ENCODE measurements at regions of chr17 and their contacts with region 1.

Region 1: GRCh38 chr17:82297714-82298537 is 19.5 kb downstream of the CD7 start:
- DNase-seq: peak; percentile 90
- H3K4me3 ChIP-seq: peak overlapping the region; percentile 40 to 52
- H3K27ac ChIP-seq: peak overlapping the region; percentile 77 to 84
- H3K4me1 ChIP-seq: peaks cover 28 to 37% of the 10 kb centered on the region in 2 experiments; a peak in 3 of 4 replicates
- H3K27me3 ChIP-seq: no peaks in the 10 kb centered on the region
- CTCF ChIP-seq: peak; percentile 18; the same call in 1 of the 2 replicates
- EP300 ChIP-seq: no peak; a peak in 1 of 4 replicates
- RAD21 ChIP-seq: no peak

Region 2: GRCh38 chr17:82236142-82236981 is 61.6 kb before region 1 on chr17:
- CTCF ChIA-PET with region 1: interaction called, 153 read pairs
- POLR2A ChIA-PET with region 1: interaction called, 5 read pairs
- DNase-seq: peak; percentile 97
- H3K4me3 ChIP-seq: no peak overlapping the region; a peak in 1 of 4 replicates
- H3K27ac ChIP-seq: peak overlapping the region in 1 of 2 experiments; percentile 6; a peak in 1 of 4 replicates
- H3K4me1 ChIP-seq: peaks cover 18 to 33% of the 10 kb centered on the region in 2 experiments; a peak in 3 of 4 replicates
- H3K27me3 ChIP-seq: no peaks in the 10 kb centered on the region
- CTCF ChIP-seq: peak; percentile 99
- EP300 ChIP-seq: no peak
- RAD21 ChIP-seq: peak; percentile 84

Region 3: GRCh38 chr17:82309656-82310570 is 12.0 kb after region 1 on chr17:
- CTCF ChIA-PET with region 1: interaction called, 26 read pairs
- POLR2A ChIA-PET with region 1: no interaction called
- DNase-seq: no peak
- H3K4me3 ChIP-seq: no peak overlapping the region
- H3K27ac ChIP-seq: no peak overlapping the region
- H3K4me1 ChIP-seq: peaks cover 0 to 8% of the 10 kb centered on the region in 2 experiments; a peak in 1 of 4 replicates
- H3K27me3 ChIP-seq: no peaks in the 10 kb centered on the region; the same call in 1 of the 2 replicates
- CTCF ChIP-seq: no peak
- EP300 ChIP-seq: no peak
- RAD21 ChIP-seq: no peak

Region 4: GRCh38 chr17:82320956-82321927 is 23.3 kb after region 1 on chr17:
- CTCF ChIA-PET with region 1: interaction called, 184 read pairs
- POLR2A ChIA-PET with region 1: interaction called, 3 read pairs
- DNase-seq: peak; percentile 95
- H3K4me3 ChIP-seq: peak overlapping the region; percentile 32 to 52
- H3K27ac ChIP-seq: no peak overlapping the region
- H3K4me1 ChIP-seq: peaks cover 5 to 14% of the 10 kb centered on the region in 2 experiments; a peak in 3 of 4 replicates
- H3K27me3 ChIP-seq: peaks cover 17% of the 10 kb centered on the region; the same call in 1 of the 2 replicates
- CTCF ChIP-seq: peak; percentile 99
- EP300 ChIP-seq: no peak
- RAD21 ChIP-seq: peak; percentile 70

Region 5: GRCh38 chr17:82351716-82352488 is 54.0 kb after region 1 on chr17:
- CTCF ChIA-PET with region 1: interaction called, 13 read pairs
- POLR2A ChIA-PET with region 1: no interaction called
- DNase-seq: peak; percentile 97
- H3K4me3 ChIP-seq: no peak overlapping the region; a peak in 1 of 4 replicates
- H3K27ac ChIP-seq: no peak overlapping the region
- H3K4me1 ChIP-seq: peaks cover 0 to 10% of the 10 kb centered on the region in 2 experiments; a peak in 1 of 4 replicates
- H3K27me3 ChIP-seq: no peaks in the 10 kb centered on the region; the same call in 1 of the 2 replicates
- CTCF ChIP-seq: peak; percentile 99
- EP300 ChIP-seq: peak in 1 of 2 experiments; percentile 41; a peak in 1 of 4 replicates
- RAD21 ChIP-seq: peak; percentile 99

Region 6: GRCh38 chr17:82365606-82366295 is 67.8 kb after region 1 on chr17:
- CTCF ChIA-PET with region 1: no interaction called
- POLR2A ChIA-PET with region 1: no interaction called
- DNase-seq: no peak
- H3K4me3 ChIP-seq: no peak overlapping the region
- H3K27ac ChIP-seq: no peak overlapping the region
- H3K4me1 ChIP-seq: peaks cover 0 to 3% of the 10 kb centered on the region in 2 experiments; a peak in 1 of 4 replicates
- H3K27me3 ChIP-seq: peaks cover 16% of the 10 kb centered on the region
- CTCF ChIP-seq: no peak
- EP300 ChIP-seq: no peak
- RAD21 ChIP-seq: no peak